Activated B cell treated with CpG ODN at 0.5 μM for 24 hours (primary cell): ENCODE measurements at regions of chr15 and their contacts with region 1.

Region 1: DNA sequence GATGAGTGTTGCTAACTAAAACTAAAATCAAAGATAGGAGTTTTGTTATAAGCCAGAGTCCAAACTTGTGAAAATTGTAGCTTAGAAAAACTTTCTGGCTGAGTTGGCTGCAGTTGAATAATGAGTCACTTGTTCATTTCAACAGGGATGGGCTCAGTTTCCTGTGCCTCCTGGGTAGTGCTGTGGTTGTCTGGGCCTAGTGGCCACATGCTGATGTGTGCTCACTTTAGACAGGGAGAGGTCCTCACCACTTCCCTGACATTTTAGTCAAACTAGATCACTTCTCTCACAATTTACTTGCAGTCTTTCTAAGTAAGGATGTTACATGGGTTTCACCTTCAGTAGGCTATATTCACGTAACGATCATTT is 6.3 kb upstream of the UBE2Q2 start:
- DNase-seq: no peak
- ATAC-seq: no peak
- H3K4me3 Mint-ChIP-seq: no peak overlapping the region
- H3K27ac Mint-ChIP-seq: no peak overlapping the region
- H3K4me1 Mint-ChIP-seq: no peaks in the 10 kb centered on the region
- H3K27me3 Mint-ChIP-seq: no peaks in the 10 kb centered on the region
- CTCF ChIP-seq: no peak

Region 2: GRCh38 chr15:75578948-75579920 is 257.7 kb before region 1 on chr15 and contains the start of gene PTPN9:
- CTCF ChIA-PET with region 1: no interaction called
- POLR2A ChIA-PET with region 1: interaction called, 20 read pairs
- intact Hi-C with region 1: no loop called
- DNase-seq: peak; percentile 63
- ATAC-seq: peak; percentile 87
- H3K4me3 Mint-ChIP-seq: peak within 1 kb of the TSS; percentile 92
- H3K27ac Mint-ChIP-seq: peak within 1 kb of the TSS; percentile 82
- H3K4me1 Mint-ChIP-seq: peaks cover 19% of the 10 kb centered on the region
- H3K27me3 Mint-ChIP-seq: no peaks in the 10 kb centered on the region
- CTCF ChIP-seq: no peak
- total RNA-seq, gene PTPN9: 18.2 and 19.2 TPM in 2 replicates